Left ventricle myocardium inferior (tissue), 1 donor: ENCODE measurements at regions of chr22 and their contacts with region 1.

Region 1: GRCh38 chr22:38599466-38599865 is 29.5 kb upstream of the DMC1 start:
- DNase-seq: no peak
- H3K4me3 ChIP-seq: no peak overlapping the region
- H3K27ac ChIP-seq: no peak overlapping the region
- H3K4me1 ChIP-seq: no peaks in the 10 kb centered on the region
- H3K27me3 ChIP-seq: no peaks in the 10 kb centered on the region
- CTCF ChIP-seq: no peak

Region 2: GRCh38 chr22:38040953-38041759 is 558.3 kb before region 1 on chr22:
- intact Hi-C with region 1: loop called (anchors 10 kb)
- DNase-seq: no peak
- H3K4me3 ChIP-seq: no peak overlapping the region
- H3K27ac ChIP-seq: no peak overlapping the region
- H3K4me1 ChIP-seq: peaks cover 8% of the 10 kb centered on the region
- H3K27me3 ChIP-seq: no peaks in the 10 kb centered on the region
- CTCF ChIP-seq: no peak